CD8-positive, alpha-beta memory T cell (primary cell): ENCODE measurements at regions of chr14 and their contacts with region 1.

Region 1: GRCh38 chr14:22549981-22550673 is 38.9 kb downstream of the DAD1 start:
- DNase-seq: peak; percentile 55 to 85 (median 70)
- H3K4me3 ChIP-seq: peak overlapping the region; percentile 19
- H3K4me3 Mint-ChIP-seq: peak overlapping the region; percentile 79 to 93 (median 84)
- H3K27ac ChIP-seq: peak overlapping the region; percentile 55
- H3K27ac Mint-ChIP-seq: peak overlapping the region; percentile 96 to 100 (median 100)
- H3K4me1 ChIP-seq: peaks cover 98% of the 10 kb centered on the region
- H3K4me1 Mint-ChIP-seq: peaks cover 92 to 98% (median 97%) of the 10 kb centered on the region in 3 donors
- H3K27me3 ChIP-seq: no peaks in the 10 kb centered on the region
- H3K27me3 Mint-ChIP-seq: peaks cover 0 to 3% of the 10 kb centered on the region in 2 donors

Region 2: GRCh38 chr14:22505697-22506377 is 44.3 kb before region 1 on chr14:
- CTCF ChIA-PET with region 1: interaction called, 3 read pairs
- POLR2A ChIA-PET with region 1: interaction called, 285 read pairs
- DNase-seq: no peak
- H3K4me3 ChIP-seq: peak overlapping the region; percentile 65
- H3K4me3 Mint-ChIP-seq: peak overlapping the region; percentile 89 to 98 (median 91)
- H3K27ac ChIP-seq: peak overlapping the region; percentile 14
- H3K27ac Mint-ChIP-seq: peak overlapping the region; percentile 92 to 100 (median 96)
- H3K4me1 ChIP-seq: peaks cover 48% of the 10 kb centered on the region
- H3K4me1 Mint-ChIP-seq: peaks cover 55 to 66% (median 62%) of the 10 kb centered on the region in 3 donors
- H3K27me3 ChIP-seq: no peaks in the 10 kb centered on the region
- H3K27me3 Mint-ChIP-seq: peaks cover 0 to 1% of the 10 kb centered on the region in 2 donors

Region 3: DNA sequence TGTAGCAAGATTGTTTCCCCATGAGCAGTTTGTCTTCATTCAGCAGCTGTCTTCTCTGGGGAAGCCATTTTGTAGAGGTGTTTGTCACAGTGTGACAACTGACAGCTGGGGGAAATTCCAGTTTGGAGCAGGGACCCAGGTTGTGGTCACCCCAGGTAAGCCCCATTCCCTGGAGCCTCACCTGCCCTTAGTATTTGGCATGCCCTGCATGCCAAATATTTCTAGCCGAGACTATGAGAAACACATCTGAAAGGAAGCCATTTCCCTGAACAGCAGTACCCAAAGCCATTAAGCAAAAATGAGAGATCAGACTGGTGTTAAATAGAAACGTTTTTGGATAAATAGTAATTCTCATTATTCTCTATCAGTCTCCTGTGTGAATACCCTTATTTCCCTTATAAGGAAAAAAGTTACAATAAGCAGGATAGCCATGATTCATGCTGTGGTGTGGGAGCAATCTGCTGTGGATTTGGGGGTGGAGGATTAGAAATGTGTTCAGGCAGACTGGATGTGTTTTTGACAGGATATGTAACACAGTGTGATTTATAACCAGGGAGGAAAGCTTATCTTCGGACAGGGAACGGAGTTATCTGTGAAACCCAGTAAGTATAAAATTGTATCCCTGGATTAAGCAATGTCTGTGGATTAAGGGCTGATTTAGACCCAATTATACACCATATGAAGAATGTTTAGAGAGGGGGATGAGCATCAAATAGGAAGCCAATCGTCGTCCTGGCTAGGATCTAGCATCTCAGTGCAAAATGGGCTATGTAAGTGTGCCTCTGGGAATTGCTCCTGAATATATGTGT is 30.0 kb before region 1 on chr14:
- CTCF ChIA-PET with region 1: interaction called, 66 read pairs
- POLR2A ChIA-PET with region 1: interaction called, 285 read pairs
- DNase-seq: peak in 1 of 5 donors; percentile 43
- H3K4me3 ChIP-seq: peak overlapping the region; percentile 69
- H3K4me3 Mint-ChIP-seq: peak overlapping the region; percentile 88 to 95 (median 90)
- H3K27ac ChIP-seq: peak overlapping the region; percentile 38
- H3K27ac Mint-ChIP-seq: peak overlapping the region; percentile 90 to 98 (median 96)
- H3K4me1 ChIP-seq: peaks cover 100% of the 10 kb centered on the region
- H3K4me1 Mint-ChIP-seq: peaks cover 90 to 100% (median 98%) of the 10 kb centered on the region in 3 donors
- H3K27me3 ChIP-seq: no peaks in the 10 kb centered on the region
- H3K27me3 Mint-ChIP-seq: no peaks in the 10 kb centered on the region

Region 4: GRCh38 chr14:22531451-22532344 is 18.4 kb before region 1 on chr14:
- CTCF ChIA-PET with region 1: interaction called, 69 read pairs
- POLR2A ChIA-PET with region 1: interaction called, 258 read pairs
- DNase-seq: peak in 1 of 5 donors; percentile 59
- H3K4me3 ChIP-seq: peak overlapping the region; percentile 61
- H3K4me3 Mint-ChIP-seq: peak overlapping the region; percentile 81 to 93 (median 83)
- H3K27ac ChIP-seq: peak overlapping the region; percentile 45
- H3K27ac Mint-ChIP-seq: peak overlapping the region; percentile 89 to 99 (median 96)
- H3K4me1 ChIP-seq: peaks cover 93% of the 10 kb centered on the region
- H3K4me1 Mint-ChIP-seq: peaks cover 92 to 98% (median 98%) of the 10 kb centered on the region in 3 donors
- H3K27me3 ChIP-seq: no peaks in the 10 kb centered on the region
- H3K27me3 Mint-ChIP-seq: no peaks in the 10 kb centered on the region

Region 5: GRCh38 chr14:22536853-22537338 is 13.2 kb before region 1 on chr14:
- CTCF ChIA-PET with region 1: interaction called, 69 read pairs
- POLR2A ChIA-PET with region 1: interaction called, 258 read pairs
- DNase-seq: peak; percentile 52 to 90 (median 68)
- H3K4me3 ChIP-seq: peak overlapping the region; percentile 60
- H3K4me3 Mint-ChIP-seq: peak overlapping the region; percentile 81 to 93 (median 85)
- H3K27ac ChIP-seq: peak overlapping the region; percentile 36
- H3K27ac Mint-ChIP-seq: peak overlapping the region; percentile 88 to 100 (median 98)
- H3K4me1 ChIP-seq: peaks cover 99% of the 10 kb centered on the region
- H3K4me1 Mint-ChIP-seq: peaks cover 96 to 100% (median 100%) of the 10 kb centered on the region in 3 donors
- H3K27me3 ChIP-seq: no peaks in the 10 kb centered on the region
- H3K27me3 Mint-ChIP-seq: no peaks in the 10 kb centered on the region

Region 6: GRCh38 chr14:22563987-22564386 is 13.9 kb after region 1 on chr14:
- CTCF ChIA-PET with region 1: interaction called, 338 read pairs
- POLR2A ChIA-PET with region 1: interaction called, 61 read pairs
- DNase-seq: no peak
- H3K4me3 ChIP-seq: peak overlapping the region; percentile 37
- H3K4me3 Mint-ChIP-seq: peak overlapping the region; percentile 9 to 80 (median 59)
- H3K27ac ChIP-seq: no peak overlapping the region
- H3K27ac Mint-ChIP-seq: peak overlapping the region; percentile 89 to 99 (median 94)
- H3K4me1 ChIP-seq: peaks cover 99% of the 10 kb centered on the region
- H3K4me1 Mint-ChIP-seq: peaks cover 92 to 100% (median 98%) of the 10 kb centered on the region in 3 donors
- H3K27me3 ChIP-seq: no peaks in the 10 kb centered on the region
- H3K27me3 Mint-ChIP-seq: peaks cover 0 to 1% of the 10 kb centered on the region in 2 donors